Mammary epithelial cell (primary cell): ENCODE measurements at regions of chr17 and their contacts with region 1.

Region 1: DNA sequence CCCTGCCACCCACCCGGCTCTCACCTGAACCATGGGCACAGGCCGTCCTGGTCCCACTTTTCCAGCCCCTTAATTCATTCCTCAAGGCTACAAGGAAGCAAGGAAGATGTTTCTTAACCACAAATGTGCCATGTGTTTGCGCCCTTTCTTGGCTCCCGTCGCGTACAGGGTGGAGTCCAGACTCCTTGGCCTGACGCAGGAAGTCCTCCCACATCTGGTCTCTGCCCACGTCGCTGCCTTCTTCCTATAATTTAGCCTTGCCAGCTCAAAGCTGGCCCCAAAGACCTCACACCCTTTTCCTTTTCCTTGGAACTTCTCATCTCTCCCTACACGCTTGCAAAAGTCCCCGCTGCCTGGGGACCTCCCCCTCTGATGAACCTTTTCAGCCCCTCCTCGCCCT is 38.8 kb upstream of the BHLHA9 start:
- DNase-seq: peak; percentile 15
- H3K4me3 ChIP-seq: no peak overlapping the region
- H3K27ac ChIP-seq: no peak overlapping the region
- H3K4me1 ChIP-seq: peaks cover 6% of the 10 kb centered on the region
- H3K27me3 ChIP-seq: peaks cover 22% of the 10 kb centered on the region
- CTCF ChIP-seq: no peak

Region 2: DNA sequence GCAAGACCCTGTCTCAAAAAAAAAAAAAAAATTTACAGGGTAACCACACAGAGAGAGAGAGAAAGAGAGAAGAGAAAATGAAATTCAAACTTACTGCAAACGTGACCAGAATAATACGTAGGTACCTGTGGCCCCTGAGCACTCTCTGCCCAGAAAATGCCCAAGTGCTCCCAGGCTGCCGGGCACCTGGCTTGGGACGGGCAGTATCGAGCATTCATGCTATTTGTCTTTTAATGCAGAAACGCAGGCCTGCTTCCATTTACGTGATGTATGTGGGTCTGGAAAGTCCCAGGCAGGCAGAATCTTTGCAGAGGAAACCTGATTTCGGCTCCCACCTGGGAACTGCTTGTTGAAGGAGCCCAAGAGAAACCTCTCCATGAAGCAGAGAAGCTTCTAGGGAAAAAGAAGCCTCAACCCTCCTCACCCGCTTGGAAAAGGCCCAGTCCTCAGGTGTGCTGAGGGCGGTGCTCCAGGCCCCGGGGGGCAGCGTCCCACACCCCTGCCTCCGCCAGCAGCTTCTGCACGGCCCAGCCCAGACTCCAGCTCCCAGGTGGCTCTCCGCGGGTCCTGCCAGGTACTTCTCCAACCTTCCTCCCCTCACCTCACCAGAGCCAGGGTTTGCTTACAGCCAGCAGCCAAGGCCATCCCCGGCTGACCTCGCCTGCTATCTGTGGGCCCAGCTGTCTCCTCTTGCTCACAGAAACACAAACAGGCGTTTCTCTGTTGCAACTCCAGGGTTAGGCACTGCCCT is 892.8 kb before region 1 on chr17:
- CTCF ChIA-PET with region 1: no interaction called
- dilution Hi-C with region 1: no loop called
- in situ Hi-C with region 1: no loop called
- intact Hi-C with region 1: no loop called
- DNase-seq: no peak
- H3K4me3 ChIP-seq: no peak overlapping the region
- H3K27ac ChIP-seq: no peak overlapping the region
- H3K4me1 ChIP-seq: peaks cover 5% of the 10 kb centered on the region
- H3K27me3 ChIP-seq: no peaks in the 10 kb centered on the region
- CTCF ChIP-seq: no peak

Region 3: DNA sequence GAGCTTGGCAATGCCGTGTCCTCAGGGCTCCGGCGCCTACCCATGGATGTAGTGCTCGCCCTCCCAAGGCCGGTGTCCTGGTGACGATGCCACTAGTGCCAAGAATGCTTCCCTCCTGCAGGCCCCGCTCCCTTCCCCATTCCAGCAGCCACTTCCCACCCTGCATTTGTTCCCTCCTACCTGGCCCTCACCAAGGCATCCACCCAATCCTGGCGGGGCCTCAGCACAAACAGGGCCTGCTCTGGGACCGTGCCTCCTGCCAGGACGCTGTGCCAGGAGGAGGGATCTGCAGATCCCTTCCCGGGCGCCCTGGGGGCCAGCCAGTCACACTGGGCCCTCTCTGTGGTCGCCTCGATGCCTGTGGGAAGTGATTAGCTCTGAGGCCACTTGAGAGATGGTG is 76.8 kb before region 1 on chr17:
- CTCF ChIA-PET with region 1: no interaction called
- dilution Hi-C with region 1: loop called (anchors 5 kb)
- in situ Hi-C with region 1: no loop called
- intact Hi-C with region 1: no loop called
- DNase-seq: no peak
- H3K4me3 ChIP-seq: no peak overlapping the region
- H3K27ac ChIP-seq: no peak overlapping the region
- H3K4me1 ChIP-seq: no peaks in the 10 kb centered on the region
- H3K27me3 ChIP-seq: no peaks in the 10 kb centered on the region
- CTCF ChIP-seq: no peak

Region 4: DNA sequence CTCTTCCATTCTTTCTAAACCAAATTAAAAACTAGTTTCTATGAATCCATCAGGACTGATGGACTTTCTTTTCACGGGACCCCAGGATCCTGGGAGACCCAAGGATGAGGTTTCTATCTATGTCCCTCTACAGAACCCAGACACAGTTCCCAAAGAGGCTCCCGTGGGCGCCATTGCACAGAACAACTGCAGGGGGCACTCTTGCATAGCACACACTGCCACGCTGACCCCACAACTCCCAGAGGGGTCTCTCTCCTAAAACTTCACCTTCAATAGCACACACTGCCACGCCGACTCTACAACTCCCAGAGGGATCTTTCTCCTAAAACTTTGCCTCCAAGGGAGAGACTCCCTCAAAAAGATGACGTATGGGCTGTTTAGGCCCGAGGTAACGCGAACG is 60.7 kb before region 1 on chr17:
- CTCF ChIA-PET with region 1: no interaction called
- dilution Hi-C with region 1: no loop called
- in situ Hi-C with region 1: no loop called
- intact Hi-C with region 1: no loop called
- DNase-seq: no peak
- H3K4me3 ChIP-seq: no peak overlapping the region
- H3K27ac ChIP-seq: no peak overlapping the region
- H3K4me1 ChIP-seq: no peaks in the 10 kb centered on the region
- H3K27me3 ChIP-seq: no peaks in the 10 kb centered on the region
- CTCF ChIP-seq: peak; percentile 5 to 10

Region 5: DNA sequence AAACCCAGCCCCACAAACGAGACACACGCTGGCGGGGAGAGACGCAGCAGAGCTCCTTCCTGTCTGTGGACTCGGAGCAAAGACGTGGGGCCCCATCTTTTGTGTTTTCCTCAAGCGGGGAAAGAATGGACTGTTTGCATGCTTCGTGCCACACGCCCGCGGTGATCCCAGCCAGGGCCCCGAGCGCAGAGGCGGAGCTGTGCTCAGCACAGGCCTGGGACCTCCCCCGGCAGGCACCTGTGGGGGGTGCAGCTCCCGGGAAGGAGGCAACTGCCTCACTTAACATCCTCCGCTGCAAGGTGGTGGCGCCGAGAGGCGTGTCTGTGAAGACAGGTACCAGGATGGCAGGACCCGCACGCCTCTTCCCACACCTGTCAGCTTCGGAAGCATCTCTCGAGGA is 67.2 kb after region 1 on chr17:
- CTCF ChIA-PET with region 1: no interaction called
- dilution Hi-C with region 1: loop called (anchors 5 kb)
- in situ Hi-C with region 1: no loop called
- intact Hi-C with region 1: no loop called
- DNase-seq: no peak
- H3K4me3 ChIP-seq: no peak overlapping the region
- H3K27ac ChIP-seq: no peak overlapping the region
- H3K4me1 ChIP-seq: no peaks in the 10 kb centered on the region
- H3K27me3 ChIP-seq: peaks cover 13% of the 10 kb centered on the region
- CTCF ChIP-seq: no peak

Region 6: DNA sequence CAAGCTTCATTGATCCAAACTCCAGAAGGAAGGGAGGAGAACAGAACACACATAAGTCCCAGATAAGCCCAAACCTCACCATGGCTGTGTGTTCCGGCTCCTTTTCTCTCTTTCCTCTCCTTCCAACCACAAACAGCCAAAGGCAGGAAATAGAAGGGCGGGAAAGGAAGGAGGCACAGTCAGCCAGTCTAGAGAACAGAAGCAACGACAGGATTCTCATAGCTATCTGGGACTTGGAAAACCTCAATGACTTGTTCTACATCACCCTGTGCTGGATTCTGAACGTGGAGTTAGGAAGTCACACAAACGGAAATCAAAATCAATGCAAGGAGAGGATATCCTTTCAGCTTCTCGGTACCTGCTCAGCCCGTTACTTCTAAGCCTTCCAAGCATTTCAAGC is 215.6 kb after region 1 on chr17:
- CTCF ChIA-PET with region 1: no interaction called
- dilution Hi-C with region 1: no loop called
- in situ Hi-C with region 1: no loop called
- intact Hi-C with region 1: no loop called
- DNase-seq: no peak
- H3K4me3 ChIP-seq: no peak overlapping the region
- H3K27ac ChIP-seq: no peak overlapping the region
- H3K4me1 ChIP-seq: peaks cover 6% of the 10 kb centered on the region
- H3K27me3 ChIP-seq: no peaks in the 10 kb centered on the region
- CTCF ChIP-seq: no peak